Spleen (tissue), 13 donors: ENCODE measurements at regions of chr17 and their contacts with region 1.

Region 1: DNA sequence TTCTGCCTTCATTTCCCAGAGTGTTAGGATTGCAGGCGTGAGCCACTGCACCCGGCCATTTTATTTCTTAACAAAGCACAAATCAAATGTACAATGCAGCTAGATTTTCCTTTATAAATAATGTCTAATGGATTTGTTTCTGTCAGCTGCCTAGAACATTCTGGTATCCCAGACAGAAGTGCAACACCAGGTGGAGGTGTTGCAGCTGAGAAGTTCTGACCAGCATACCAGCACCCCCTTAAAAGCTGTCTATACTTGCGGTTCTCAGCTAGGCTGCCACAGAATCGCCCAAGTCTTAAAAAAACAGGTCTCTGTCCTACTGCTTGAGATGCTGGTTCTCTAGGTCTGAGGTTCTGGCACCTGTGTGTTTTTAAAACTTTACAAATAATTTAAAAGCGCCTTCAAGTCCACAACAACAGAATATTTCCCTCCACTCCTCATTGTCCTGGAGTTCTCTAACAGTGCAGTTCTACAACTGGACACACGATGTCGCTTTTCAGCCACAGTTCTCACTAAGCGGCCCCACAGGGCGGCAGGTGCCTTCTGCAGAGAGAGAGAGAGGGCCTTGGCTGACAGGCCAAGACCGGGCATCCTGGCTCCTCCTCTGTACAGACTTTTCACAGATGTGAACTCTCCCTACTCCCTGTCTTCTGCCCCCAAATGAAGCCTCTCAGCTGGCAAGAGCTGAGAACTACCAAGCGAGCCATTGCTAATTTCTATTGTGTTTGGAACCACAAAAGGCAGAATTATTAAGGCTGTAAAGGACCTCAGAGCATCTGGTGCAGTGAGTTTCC is 32.6 kb upstream of the MEOX1 start:
- DNase-seq: peak; percentile 91
- H3K4me3 ChIP-seq: no peak overlapping the region
- H3K27ac ChIP-seq: no peak overlapping the region
- H3K4me1 ChIP-seq: peaks cover 3 to 40% (median 18%) of the 10 kb centered on the region in 6 donors
- H3K27me3 ChIP-seq: peaks cover 0 to 29% (median 0%) of the 10 kb centered on the region in 7 donors
- CTCF ChIP-seq: peak; percentile 83 to 96 (median 92)
- POLR2A ChIP-seq: no peak

Region 2: DNA sequence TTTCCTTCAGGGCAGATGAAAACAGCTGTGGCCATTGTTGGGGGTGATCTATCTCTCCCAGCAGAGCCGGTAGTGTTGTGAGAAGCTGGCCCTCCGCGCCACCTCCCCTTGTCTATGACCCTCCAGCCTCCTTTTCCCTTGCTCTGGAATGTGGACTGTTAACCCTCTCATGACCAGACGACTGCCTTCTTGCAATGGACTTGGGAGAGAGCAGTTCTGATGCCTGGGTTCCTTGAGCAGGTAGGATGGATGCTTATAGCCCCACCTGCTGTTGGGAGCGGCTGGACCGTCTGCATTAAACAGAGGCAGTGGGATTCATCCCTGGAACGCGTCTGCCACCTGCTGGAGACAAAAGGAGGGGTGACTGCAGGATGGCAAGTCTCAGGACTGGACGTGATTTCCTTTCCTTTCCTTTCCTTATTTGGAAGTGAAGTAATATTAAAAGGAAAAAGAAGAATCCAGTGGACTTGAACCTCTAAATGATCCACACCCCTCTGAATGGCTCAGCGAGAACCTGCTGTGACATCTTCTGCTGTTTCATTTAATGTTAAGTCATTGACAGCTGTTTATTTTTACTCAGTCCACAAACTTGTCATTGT is 66.1 kb after region 1 on chr17:
- intact Hi-C with region 1: loop called (anchors 2 kb)
- DNase-seq: peak; percentile 95
- H3K4me3 ChIP-seq: no peak overlapping the region
- H3K27ac ChIP-seq: no peak overlapping the region
- H3K4me1 ChIP-seq: peaks cover 4 to 26% (median 9%) of the 10 kb centered on the region in 6 donors
- H3K27me3 ChIP-seq: peaks cover 0 to 38% (median 11%) of the 10 kb centered on the region in 7 donors
- CTCF ChIP-seq: peak; percentile 90 to 99 (median 96)
- POLR2A ChIP-seq: no peak

Region 3: DNA sequence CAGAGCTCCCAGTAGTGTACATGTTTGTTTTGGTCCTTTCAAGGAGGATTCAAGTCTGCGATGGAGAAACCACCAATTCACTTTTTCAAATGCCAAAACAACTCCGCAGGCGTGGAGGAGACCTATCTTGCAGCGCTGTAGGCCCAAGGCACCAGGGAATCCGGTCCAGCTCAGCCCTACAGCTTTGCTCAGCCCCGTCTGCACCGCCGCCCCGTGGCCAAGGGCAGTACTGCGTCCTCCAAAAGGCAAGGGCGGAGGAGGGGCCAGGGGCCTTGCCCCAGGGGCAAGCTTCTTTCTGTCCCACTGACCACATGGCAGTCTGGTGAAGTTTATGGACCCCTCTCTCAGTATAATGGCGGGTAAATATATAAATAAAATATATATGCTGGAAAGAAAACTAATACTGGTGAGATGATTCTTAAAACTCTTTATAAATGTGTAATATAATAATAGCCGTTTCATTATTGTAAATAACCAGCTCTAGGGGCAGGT is 152.0 kb after region 1 on chr17:
- intact Hi-C with region 1: loop called (anchors 10 kb)
- DNase-seq: peak; percentile 93
- H3K4me3 ChIP-seq: no peak overlapping the region
- H3K27ac ChIP-seq: no peak overlapping the region
- H3K4me1 ChIP-seq: peaks cover 0 to 20% (median 12%) of the 10 kb centered on the region in 6 donors
- H3K27me3 ChIP-seq: peaks cover 0 to 24% (median 0%) of the 10 kb centered on the region in 7 donors
- CTCF ChIP-seq: peak; percentile 84 to 97 (median 95)
- POLR2A ChIP-seq: no peak

Region 4: DNA sequence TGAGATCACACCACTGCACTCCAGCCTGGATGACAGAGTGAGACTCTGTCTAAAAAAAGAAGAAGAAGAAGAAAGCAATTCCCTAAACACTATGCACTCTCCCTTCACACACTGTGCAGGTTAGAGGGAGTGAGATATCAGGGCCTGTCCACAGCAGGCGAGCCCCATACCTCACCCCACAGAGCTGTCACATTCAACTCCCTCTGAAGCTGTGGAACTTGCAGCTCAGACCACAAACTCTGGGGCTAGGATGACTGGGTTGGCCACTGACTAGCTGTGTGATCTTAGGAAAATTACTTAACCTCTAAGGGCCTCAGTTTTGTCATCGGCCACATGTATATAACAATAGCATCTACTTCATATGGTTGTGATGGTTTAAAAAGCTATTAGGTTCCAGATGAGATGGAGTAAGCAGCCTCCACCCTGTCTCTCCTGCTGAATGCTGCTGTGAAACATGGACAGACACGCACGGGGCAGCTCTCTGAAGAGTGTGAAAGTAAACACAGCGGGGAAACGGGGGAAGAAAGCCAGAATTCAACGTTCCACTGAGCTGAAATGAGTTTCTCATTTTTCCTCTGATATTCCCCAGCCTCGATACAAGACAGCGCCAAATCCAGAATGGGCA is 273.1 kb after region 1 on chr17:
- intact Hi-C with region 1: no loop called
- DNase-seq: no peak
- H3K4me3 ChIP-seq: no peak overlapping the region
- H3K27ac ChIP-seq: no peak overlapping the region
- H3K4me1 ChIP-seq: no peaks in the 10 kb centered on the region
- H3K27me3 ChIP-seq: peaks cover 0 to 21% (median 0%) of the 10 kb centered on the region in 7 donors
- CTCF ChIP-seq: no peak
- POLR2A ChIP-seq: no peak